Spleen (tissue), 13 donors: ENCODE measurements at regions of chr7 and their contacts with region 1.

Region 1: DNA sequence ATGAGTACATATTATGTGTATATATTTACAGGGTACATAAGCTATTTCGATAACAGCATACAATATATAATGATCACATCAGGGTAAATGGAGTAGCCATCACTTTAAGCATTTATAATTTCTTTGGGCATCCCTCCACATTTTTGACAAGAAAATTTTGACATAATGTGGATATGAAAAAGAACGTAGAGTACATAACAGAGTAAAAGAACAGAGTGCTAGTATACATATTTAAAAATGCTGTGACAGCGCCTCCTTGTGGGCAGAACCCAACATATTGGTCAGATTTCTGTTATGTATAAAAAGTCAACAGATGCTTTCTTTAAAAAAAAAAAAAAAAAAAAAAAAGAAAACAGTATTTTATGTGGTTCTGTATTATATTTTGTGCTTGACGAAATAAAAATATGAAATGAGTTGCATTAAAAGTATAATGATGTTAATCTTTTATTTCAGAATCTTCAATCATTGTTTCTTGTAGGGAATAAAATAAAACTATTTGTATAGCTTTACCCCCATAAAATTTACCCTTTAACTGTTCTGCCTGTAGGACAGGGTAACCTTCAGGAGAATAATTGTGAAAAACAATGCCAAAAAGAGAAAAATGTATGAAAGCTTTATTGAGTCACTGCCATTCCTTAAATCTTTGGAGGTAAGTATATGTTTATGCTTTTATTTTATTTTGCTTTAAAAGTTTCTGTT is 18.3 kb upstream of the HBP1 start:
- DNase-seq: peak; percentile 80
- H3K4me3 ChIP-seq: no peak overlapping the region
- H3K27ac ChIP-seq: no peak overlapping the region
- H3K4me1 ChIP-seq: peaks cover 0 to 20% (median 7%) of the 10 kb centered on the region in 6 donors
- H3K27me3 ChIP-seq: no peaks in the 10 kb centered on the region
- CTCF ChIP-seq: peak; percentile 14 to 78 (median 66)
- POLR2A ChIP-seq: no peak

Region 2: GRCh38 chr7:106793015-106793975 is 357.2 kb before region 1 on chr7:
- intact Hi-C with region 1: loop called (anchors 2 kb)
- DNase-seq: no peak
- H3K4me3 ChIP-seq: no peak overlapping the region
- H3K27ac ChIP-seq: no peak overlapping the region
- H3K4me1 ChIP-seq: peaks cover 0 to 6% (median 0%) of the 10 kb centered on the region in 6 donors
- H3K27me3 ChIP-seq: no peaks in the 10 kb centered on the region
- CTCF ChIP-seq: peak; percentile 49 to 76 (median 69)
- POLR2A ChIP-seq: no peak

Region 3: GRCh38 chr7:106870983-106871410 is 279.5 kb before region 1 on chr7:
- intact Hi-C with region 1: loop called (anchors 10 kb)
- DNase-seq: no peak
- H3K4me3 ChIP-seq: peak overlapping the region in 3 of 8 donors; percentile 15 to 52 (median 20)
- H3K27ac ChIP-seq: peak overlapping the region in 7 of 8 donors; percentile 3 to 70 (median 48)
- H3K4me1 ChIP-seq: peaks cover 34 to 90% (median 72%) of the 10 kb centered on the region in 6 donors
- H3K27me3 ChIP-seq: no peaks in the 10 kb centered on the region
- CTCF ChIP-seq: no peak
- POLR2A ChIP-seq: no peak

Region 4: GRCh38 chr7:106947244-106947728 is 203.2 kb before region 1 on chr7:
- intact Hi-C with region 1: loop called (anchors 5 kb)
- DNase-seq: no peak
- H3K4me3 ChIP-seq: no peak overlapping the region
- H3K27ac ChIP-seq: no peak overlapping the region
- H3K4me1 ChIP-seq: no peaks in the 10 kb centered on the region
- H3K27me3 ChIP-seq: no peaks in the 10 kb centered on the region
- CTCF ChIP-seq: peak; percentile 31 to 74 (median 67)
- POLR2A ChIP-seq: no peak

Region 5: DNA sequence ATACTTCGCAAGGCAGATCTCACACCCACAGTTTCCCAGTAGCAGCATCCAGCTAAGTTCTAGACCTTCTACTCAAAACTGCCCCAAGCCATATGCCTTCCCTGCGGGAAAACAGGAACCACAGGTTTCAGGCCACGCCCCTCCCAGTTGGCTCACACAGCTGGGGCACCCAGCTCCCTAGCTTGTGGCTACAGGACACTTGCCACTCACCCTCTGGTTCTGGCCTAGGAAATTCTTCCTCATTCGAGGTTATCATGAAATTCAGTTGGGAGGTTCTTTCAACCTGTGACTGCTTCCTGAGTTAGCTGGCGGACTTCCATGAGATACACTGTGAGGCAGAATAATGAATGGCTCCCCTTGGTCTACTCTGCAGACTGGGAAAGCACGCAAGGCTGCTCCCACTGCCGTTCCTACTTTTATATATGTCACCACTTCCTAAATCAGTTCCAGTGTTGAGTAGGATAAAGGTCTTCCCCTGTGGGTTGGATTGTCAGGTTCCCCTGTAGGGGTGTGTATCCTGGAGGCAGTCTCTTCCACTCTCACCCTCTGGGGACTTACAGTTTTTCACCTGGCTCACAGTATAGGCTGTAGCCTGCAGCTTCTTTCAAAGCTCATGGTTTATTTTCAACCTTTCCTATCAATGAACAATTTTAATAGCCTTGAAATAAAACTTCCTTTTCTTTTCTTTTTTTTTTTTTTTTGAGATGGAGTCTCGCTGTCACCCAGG is 356.3 kb after region 1 on chr7:
- intact Hi-C with region 1: no loop called
- DNase-seq: no peak
- H3K4me3 ChIP-seq: no peak overlapping the region
- H3K27ac ChIP-seq: peak overlapping the region in 1 of 8 donors; percentile 1
- H3K4me1 ChIP-seq: peaks cover 0 to 10% (median 7%) of the 10 kb centered on the region in 6 donors
- H3K27me3 ChIP-seq: no peaks in the 10 kb centered on the region
- CTCF ChIP-seq: no peak
- POLR2A ChIP-seq: no peak